ENCODE measurements at regions of chr9 and their contacts with region 1.

Region 1: DNA sequence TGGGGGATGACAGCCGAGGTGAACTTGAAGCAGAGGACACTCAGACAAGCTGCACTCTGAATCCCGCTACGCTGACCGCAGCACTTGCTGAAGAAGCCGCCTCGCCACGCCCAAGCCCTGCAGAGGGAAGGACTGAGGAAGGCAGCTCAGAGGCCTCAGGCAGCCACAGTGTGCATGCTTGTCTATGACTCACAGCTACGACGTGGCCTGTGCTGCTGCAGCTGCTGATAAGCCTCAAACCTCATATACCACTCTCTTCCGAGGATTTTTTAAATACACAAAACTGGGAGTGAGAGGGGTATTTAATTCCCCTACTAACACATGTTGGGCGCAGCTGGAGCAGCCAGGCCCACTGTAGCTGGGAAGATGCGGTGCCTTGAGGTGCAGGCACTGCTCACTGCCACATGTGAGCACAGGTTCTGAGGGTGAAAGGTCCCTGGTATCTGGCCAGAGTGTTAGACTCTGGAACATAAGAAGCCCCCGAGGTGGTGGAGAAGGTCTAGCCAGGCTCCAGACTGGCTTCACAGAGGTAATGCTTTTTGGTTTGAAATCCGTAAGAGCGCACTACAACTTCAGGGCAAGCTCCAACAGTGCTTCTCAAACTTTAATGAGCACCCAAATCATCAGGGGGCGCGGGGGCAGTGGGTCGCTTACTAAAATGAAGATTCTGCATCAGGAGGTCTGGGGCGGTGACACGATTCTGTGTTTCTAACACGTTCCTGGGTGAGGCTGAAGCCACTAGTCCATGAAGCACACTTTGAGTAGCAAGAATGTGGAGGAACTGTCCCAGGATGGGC is 196.8 kb downstream of the AUH start:
- DNase-seq: peak; percentile 88
- H3K4me3 Mint-ChIP-seq: peak overlapping the region; percentile 61
- H3K27ac Mint-ChIP-seq: peak overlapping the region; percentile 92
- H3K4me1 Mint-ChIP-seq: peaks cover 46% of the 10 kb centered on the region
- H3K27me3 Mint-ChIP-seq: no peaks in the 10 kb centered on the region

Region 2: DNA sequence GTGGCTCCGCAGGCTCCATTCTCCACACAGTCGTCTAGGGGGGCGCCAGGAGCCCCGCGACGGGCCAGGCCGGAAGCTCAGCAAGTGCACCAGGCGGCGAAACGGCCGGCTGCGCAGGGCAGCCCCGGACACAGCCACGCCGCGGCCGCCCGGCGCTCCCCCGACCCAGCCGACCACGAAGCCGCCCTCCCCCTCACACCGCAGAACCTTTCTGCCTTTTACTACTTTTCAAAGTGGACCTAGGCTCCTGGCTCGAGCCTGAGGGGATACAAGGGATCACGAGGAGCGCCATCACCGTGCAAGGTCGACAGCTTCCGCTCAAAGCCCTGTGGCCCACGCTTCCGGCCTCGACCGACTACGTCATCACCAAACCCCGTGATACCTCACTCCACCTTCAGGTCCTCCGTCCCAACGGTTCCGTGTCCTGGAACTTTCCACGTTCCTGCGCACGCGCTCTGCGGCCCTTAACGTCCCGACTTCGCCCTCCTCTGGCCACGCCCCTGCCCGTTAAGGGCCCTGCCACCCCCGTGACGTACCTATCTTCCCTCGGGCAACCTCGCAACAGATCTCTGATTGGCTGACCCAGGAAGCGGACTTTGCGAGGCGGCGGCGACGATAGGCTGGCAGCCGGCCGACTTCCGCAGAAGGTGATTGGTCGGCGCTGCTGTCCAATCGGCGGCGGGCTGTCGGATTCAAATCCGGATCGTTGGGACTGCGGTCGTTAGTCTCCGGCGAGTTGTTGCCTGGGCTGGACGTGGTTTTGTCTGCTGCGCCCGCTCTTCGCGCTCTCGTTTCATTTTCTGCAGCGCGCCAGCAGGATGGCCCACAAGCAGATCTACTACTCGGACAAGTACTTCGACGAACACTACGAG is 1854.2 kb before region 1 on chr9 and contains the start of gene CKS2:
- CTCF ChIA-PET with region 1: no interaction called
- POLR2A ChIA-PET with region 1: no interaction called
- intact Hi-C with region 1: no loop called
- DNase-seq: peak; percentile 100
- H3K4me3 Mint-ChIP-seq: peak within 1 kb of the TSS; percentile 94
- H3K27ac Mint-ChIP-seq: peak within 1 kb of the TSS; percentile 98
- H3K4me1 Mint-ChIP-seq: peaks cover 39% of the 10 kb centered on the region
- H3K27me3 Mint-ChIP-seq: peaks cover 2% of the 10 kb centered on the region
- total RNA-seq, gene CKS2: 229 to 232 TPM

Region 3: GRCh38 chr9:91177661-91178280 is 12.8 kb after region 1 on chr9:
- CTCF ChIA-PET with region 1: interaction called, 4 read pairs
- POLR2A ChIA-PET with region 1: interaction called, 29 read pairs
- intact Hi-C with region 1: no loop called
- DNase-seq: peak; percentile 70
- H3K4me3 Mint-ChIP-seq: peak overlapping the region; percentile 9
- H3K27ac Mint-ChIP-seq: peak overlapping the region; percentile 89
- H3K4me1 Mint-ChIP-seq: peaks cover 37% of the 10 kb centered on the region
- H3K27me3 Mint-ChIP-seq: no peaks in the 10 kb centered on the region

Region 4: GRCh38 chr9:91750343-91750742 is 585.4 kb after region 1 on chr9:
- CTCF ChIA-PET with region 1: no interaction called
- POLR2A ChIA-PET with region 1: no interaction called
- intact Hi-C with region 1: no loop called
- DNase-seq: no peak
- H3K4me3 Mint-ChIP-seq: no peak overlapping the region
- H3K27ac Mint-ChIP-seq: no peak overlapping the region
- H3K4me1 Mint-ChIP-seq: no peaks in the 10 kb centered on the region
- H3K27me3 Mint-ChIP-seq: no peaks in the 10 kb centered on the region

Measured in activated CD4-positive, alpha-beta memory T cell treated with anti-CD3 and anti-CD28 coated beads for 36 hours (primary cell).